GM18951 (cell line): ENCODE measurements at regions of chr6 and their contacts with region 1.

Region 1: GRCh38 chr6:88780714-88781389 is 182.6 kb downstream of the RNGTT start:
- POLR2A ChIP-seq: no peak

Region 2: DNA sequence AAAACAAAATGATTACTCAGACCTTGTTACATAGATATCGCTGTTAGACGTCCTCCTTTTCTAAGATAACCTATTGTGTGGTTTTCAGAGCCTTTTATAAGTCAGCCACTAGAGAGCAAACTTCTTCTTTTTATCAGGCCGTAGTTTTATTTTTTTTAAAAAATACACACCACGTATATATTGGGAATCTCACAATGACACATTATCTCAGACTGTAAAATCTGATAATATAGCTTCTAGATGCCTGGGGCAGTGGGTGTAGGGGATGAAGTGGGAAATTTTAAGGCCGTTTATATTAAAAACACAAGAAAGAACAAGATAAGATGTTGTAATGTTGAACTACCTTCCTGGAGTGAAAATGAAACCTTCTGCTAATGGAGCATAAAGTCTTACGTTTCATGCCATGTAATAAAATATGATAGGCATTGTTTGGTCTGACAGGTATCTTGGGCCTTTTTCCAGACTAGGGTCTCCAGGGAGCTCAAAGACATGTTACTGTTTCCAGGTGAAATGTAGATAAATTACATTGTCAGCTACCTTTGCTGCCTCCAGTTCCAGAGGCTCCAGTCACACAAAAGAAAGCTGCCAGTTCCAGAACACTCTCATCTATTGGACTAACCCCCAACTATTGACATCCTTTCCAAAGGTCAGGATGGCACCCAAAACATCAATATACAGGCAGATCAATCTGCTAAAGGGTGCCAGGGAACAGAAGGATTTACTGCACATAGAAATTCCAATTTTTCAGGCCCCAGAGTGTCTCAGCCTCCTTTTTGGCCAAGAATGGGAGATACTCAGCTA is 948.6 kb before region 1 on chr6:
- in situ Hi-C with region 1: loop called (anchors 25 kb)
- POLR2A ChIP-seq: no peak